ENCODE measurements at regions of chr5 and their contacts with region 1.

Region 1: DNA sequence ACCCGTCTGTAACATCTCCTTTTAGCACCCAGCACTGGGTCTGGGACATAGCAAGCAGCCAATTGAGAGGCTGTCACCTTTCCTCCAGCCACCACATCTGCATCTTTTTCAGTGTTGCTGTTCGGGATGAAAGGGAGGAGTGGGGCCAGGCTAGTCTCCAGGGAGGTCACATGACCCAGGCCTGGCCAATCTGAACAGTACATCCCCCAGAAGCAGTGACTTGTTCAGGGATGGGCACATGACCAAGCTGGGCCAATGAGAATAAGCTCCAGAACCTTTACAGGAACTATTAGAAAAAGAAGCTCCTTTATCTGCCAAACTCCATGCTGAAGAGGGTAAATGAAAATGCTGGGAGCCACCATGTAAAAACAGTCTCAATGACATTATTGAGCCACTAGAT is 359.0 kb downstream of the SLIT3 start:
- DNase-seq: no peak
- H3K4me3 Mint-ChIP-seq: no peak overlapping the region
- H3K27ac Mint-ChIP-seq: no peak overlapping the region
- H3K4me1 Mint-ChIP-seq: peaks cover 5% of the 10 kb centered on the region
- H3K27me3 Mint-ChIP-seq: peaks cover 4% of the 10 kb centered on the region

Region 2: DNA sequence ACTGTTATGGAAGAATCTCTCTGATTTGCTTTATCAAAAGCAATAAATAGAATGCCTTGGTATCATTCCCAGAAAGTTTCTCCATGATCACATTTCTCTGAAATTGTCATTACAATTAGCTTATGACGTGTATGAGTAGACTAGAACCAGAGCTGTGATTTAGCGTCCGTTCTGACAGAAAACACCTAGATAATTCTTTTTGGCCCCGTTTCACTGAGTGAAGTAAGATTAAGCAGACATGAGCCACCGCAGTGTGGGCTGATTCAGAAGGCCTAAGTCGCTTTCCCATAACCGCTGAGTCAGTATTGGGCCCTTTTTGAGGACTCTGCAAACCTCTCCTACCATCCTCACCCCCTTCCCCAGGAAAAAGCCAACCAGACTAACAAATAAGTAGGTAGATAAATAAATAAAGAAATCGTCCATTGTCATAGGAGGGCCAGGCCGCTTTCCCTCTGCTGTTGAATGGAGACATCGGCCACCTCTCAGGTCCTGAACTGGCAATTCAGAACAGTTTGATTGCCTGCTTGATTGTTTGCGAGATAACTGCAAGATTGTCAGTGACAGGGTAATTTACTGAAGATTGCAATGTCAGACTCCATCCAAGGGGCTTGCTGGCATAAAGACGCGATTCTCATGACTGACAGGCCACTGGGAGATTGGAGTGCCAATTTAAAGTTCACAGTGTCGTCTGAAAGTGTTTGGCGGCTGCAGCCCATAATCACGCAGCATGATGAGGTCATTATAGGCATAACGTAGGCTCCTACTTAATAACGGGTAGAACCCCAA is 755.4 kb before region 1 on chr5:
- CTCF ChIA-PET with region 1: no interaction called
- POLR2A ChIA-PET with region 1: no interaction called
- intact Hi-C with region 1: no loop called
- DNase-seq: no peak
- H3K4me3 Mint-ChIP-seq: no peak overlapping the region
- H3K27ac Mint-ChIP-seq: no peak overlapping the region
- H3K4me1 Mint-ChIP-seq: no peaks in the 10 kb centered on the region
- H3K27me3 Mint-ChIP-seq: peaks cover 3% of the 10 kb centered on the region

Region 3: GRCh38 chr5:168579488-168580226 is 362.2 kb before region 1 on chr5:
- CTCF ChIA-PET with region 1: no interaction called
- POLR2A ChIA-PET with region 1: no interaction called
- intact Hi-C with region 1: no loop called
- DNase-seq: peak; percentile 99
- H3K4me3 Mint-ChIP-seq: peak overlapping the region; percentile 81
- H3K27ac Mint-ChIP-seq: peak overlapping the region; percentile 96
- H3K4me1 Mint-ChIP-seq: peaks cover 34% of the 10 kb centered on the region
- H3K27me3 Mint-ChIP-seq: no peaks in the 10 kb centered on the region

Region 4: GRCh38 chr5:168747987-168748777 is 193.7 kb before region 1 on chr5:
- CTCF ChIA-PET with region 1: no interaction called
- POLR2A ChIA-PET with region 1: no interaction called
- intact Hi-C with region 1: loop called (anchors 5 kb)
- DNase-seq: peak; percentile 72
- H3K4me3 Mint-ChIP-seq: no peak overlapping the region
- H3K27ac Mint-ChIP-seq: no peak overlapping the region
- H3K4me1 Mint-ChIP-seq: peaks cover 10% of the 10 kb centered on the region
- H3K27me3 Mint-ChIP-seq: peaks cover 1% of the 10 kb centered on the region

Region 5: DNA sequence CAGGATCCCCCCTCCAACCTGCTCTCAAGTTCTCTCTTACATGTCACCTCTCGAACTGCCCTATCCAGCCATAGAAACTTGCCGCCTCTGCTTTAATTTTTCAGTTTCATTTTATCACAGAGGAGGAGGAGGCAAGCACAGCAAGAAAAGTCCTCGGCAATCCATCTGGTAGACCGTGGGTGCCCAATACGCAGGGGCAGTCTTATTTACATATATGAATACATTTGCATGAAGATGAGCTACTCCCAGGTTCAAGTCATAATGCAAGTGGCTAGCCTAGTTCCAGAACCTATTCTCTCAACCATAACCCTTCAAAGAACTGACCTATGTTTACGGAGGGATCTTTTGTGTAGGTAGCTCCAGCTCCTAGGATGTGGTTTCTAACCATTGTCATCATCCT is 139.6 kb before region 1 on chr5:
- CTCF ChIA-PET with region 1: no interaction called
- POLR2A ChIA-PET with region 1: no interaction called
- intact Hi-C with region 1: loop called (anchors 5 kb)
- DNase-seq: peak; percentile 60
- H3K4me3 Mint-ChIP-seq: peak overlapping the region; percentile 45
- H3K27ac Mint-ChIP-seq: peak overlapping the region; percentile 81
- H3K4me1 Mint-ChIP-seq: peaks cover 32% of the 10 kb centered on the region
- H3K27me3 Mint-ChIP-seq: peaks cover 13% of the 10 kb centered on the region

Region 6: GRCh38 chr5:169116961-169117461 is 175.1 kb after region 1 on chr5:
- CTCF ChIA-PET with region 1: no interaction called
- POLR2A ChIA-PET with region 1: no interaction called
- intact Hi-C with region 1: no loop called
- DNase-seq: no peak
- H3K4me3 Mint-ChIP-seq: no peak overlapping the region
- H3K27ac Mint-ChIP-seq: no peak overlapping the region
- H3K4me1 Mint-ChIP-seq: no peaks in the 10 kb centered on the region
- H3K27me3 Mint-ChIP-seq: no peaks in the 10 kb centered on the region

Region 7: GRCh38 chr5:169914766-169915165 is 972.9 kb after region 1 on chr5:
- CTCF ChIA-PET with region 1: no interaction called
- POLR2A ChIA-PET with region 1: no interaction called
- intact Hi-C with region 1: no loop called
- DNase-seq: no peak
- H3K4me3 Mint-ChIP-seq: no peak overlapping the region
- H3K27ac Mint-ChIP-seq: no peak overlapping the region
- H3K4me1 Mint-ChIP-seq: no peaks in the 10 kb centered on the region
- H3K27me3 Mint-ChIP-seq: no peaks in the 10 kb centered on the region